ENCODE measurements at regions of chr16 and their contacts with region 1.

Region 1: DNA sequence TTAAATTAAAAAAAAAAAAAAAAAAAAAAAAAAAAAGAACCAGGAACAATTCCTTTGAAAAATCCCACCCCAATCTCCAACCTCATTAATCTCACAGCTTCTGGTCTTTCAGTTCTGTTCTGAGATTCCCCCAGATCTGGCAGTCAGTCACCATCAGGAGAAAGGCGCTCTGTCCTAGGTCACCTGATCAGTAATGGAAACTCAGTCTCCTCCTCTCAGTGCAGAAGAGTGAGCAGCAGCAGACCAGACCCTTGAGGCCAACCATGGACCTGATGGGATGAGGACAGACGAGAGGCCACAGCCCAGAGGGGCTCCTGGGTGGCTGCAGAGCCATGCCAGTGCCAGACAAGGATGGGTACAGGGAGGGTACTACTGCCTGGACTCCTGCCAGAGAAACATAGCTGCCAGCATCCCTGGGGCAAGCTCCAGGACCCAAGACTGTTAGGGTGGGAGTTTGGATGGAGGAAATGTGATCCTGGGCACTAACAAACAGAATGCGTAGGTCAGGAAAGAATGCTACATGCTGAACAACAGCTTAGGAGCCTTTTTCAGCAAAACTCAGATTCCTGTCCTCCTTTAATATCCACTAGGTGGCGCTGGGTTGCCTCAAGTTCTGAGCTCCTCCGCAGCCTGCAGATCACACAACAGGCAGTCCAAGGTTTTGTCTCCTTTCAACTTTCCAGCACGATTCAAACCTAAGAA is 28.7 kb downstream of the MPG start:
- DNase-seq: peak in 1 of 3 donors; percentile 68
- ATAC-seq: peak; percentile 17 to 34
- H3K4me3 ChIP-seq: no peak overlapping the region
- H3K27ac ChIP-seq: no peak overlapping the region
- H3K4me1 ChIP-seq: peaks cover 9% of the 10 kb centered on the region
- H3K27me3 ChIP-seq: no peaks in the 10 kb centered on the region

Region 2: DNA sequence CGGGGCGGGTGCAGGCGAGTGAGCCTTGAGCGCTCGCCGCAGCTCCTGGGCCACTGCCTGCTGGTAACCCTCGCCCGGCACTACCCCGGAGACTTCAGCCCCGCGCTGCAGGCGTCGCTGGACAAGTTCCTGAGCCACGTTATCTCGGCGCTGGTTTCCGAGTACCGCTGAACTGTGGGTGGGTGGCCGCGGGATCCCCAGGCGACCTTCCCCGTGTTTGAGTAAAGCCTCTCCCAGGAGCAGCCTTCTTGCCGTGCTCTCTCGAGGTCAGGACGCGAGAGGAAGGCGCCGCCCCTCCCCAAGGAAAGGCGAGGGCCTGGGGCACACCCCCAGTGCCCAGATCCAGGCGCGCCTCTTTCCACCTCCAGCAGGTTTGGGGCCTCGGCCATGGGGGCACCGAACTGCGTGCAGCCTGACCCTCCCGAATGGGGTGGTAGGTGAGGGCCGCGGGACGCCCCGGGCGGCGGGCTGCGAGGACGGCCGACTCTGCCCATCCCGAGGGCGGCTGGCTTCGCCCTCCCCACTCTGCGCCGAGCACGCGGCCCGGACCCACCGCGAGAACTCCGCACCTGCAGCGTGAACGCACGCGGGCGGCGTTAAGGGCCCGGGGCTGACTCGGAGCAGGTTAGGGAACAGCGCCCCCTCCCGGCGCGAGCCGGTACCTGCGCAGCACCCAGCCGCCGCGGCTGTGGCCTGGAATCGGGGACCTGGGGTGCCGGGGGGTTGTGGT is 74.3 kb after region 1 on chr16:
- intact Hi-C with region 1: loop called in 1 of 4 experiments (anchors 5 kb)
- DNase-seq: peak; percentile 67 to 89 (median 88)
- ATAC-seq: peak; percentile 71 to 79
- H3K4me3 ChIP-seq: peak overlapping the region; percentile 6
- H3K27ac ChIP-seq: no peak overlapping the region
- H3K4me1 ChIP-seq: peaks cover 6% of the 10 kb centered on the region
- H3K27me3 ChIP-seq: no peaks in the 10 kb centered on the region

Region 3: GRCh38 chr16:352547-353403 is 246.0 kb after region 1 on chr16 and contains the start of gene AXIN1:
- intact Hi-C with region 1: loop called in 1 of 4 experiments (anchors 5 kb)
- DNase-seq: peak; percentile 99 to 100 (median 100)
- ATAC-seq: peak; percentile 95
- H3K4me3 ChIP-seq: peak within 1 kb of the TSS; percentile 92
- H3K27ac ChIP-seq: no peak within 1 kb of the TSS
- H3K4me1 ChIP-seq: no peaks in the 10 kb centered on the region
- H3K27me3 ChIP-seq: no peaks in the 10 kb centered on the region
- total RNA-seq, gene AXIN1: 8.4 to 12.2 (median 10.6) TPM

Region 4: DNA sequence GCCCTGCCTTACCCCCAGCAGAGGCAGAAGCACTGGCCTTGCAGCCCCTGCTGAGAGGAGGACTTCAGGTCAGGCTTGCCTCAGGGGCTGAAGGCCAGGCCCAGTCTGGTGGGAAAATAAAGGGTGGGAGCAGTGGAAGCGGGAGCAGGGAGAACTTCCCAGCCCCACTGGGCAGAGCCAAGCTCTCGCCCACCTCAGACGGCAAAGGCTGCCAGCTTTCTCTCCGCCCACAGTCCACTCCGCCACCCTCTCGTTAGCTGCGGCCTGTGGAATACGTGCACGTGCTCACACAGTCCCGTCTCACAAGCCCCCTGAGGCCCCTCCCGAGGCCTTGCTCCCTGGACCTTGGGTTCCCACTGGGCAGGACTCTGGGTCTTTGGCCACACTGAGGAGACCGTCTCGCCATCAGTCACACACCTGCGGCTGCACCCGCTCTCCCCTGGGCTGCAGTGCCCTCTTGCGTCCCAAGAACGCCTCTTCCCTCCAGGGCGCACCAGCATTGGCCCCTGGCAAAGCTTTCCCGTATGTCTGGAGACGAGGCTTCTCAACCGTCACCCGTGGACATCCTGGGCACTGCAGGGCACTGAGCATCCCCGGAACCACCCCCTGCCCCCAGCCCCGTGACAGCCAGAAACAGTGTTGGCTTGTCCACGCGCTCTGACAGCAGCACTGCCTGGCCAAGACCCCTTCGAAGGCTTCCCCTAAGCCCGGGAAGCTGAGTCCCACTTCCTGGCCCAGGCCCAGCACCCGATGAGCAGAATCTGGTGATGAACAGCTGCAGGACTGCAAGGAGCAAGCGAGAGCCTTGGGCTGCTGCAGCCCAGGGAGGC is 255.3 kb after region 1 on chr16:
- intact Hi-C with region 1: loop called in 2 of 4 experiments (anchors 5 kb)
- DNase-seq: peak; percentile 71 to 88 (median 86)
- ATAC-seq: peak; percentile 79 to 80
- H3K4me3 ChIP-seq: no peak overlapping the region
- H3K27ac ChIP-seq: no peak overlapping the region
- H3K4me1 ChIP-seq: no peaks in the 10 kb centered on the region
- H3K27me3 ChIP-seq: no peaks in the 10 kb centered on the region